ENCODE measurements at regions of chr16 and their contacts with region 1.

Region 1: GRCh38 chr16:2155091-2156021 is at the start of gene TRAF7:
- DNase-seq: peak; percentile 99
- H3K4me3 ChIP-seq: peak within 1 kb of the TSS; percentile 93 to 100 (median 98)
- H3K27ac ChIP-seq: peak within 1 kb of the TSS; percentile 83
- H3K4me1 ChIP-seq: peaks cover 0 to 52% (median 34%) of the 10 kb centered on the region in 4 experiments; a peak in 6 of 7 replicates
- H3K27me3 ChIP-seq: no peaks in the 10 kb centered on the region
- CTCF ChIP-seq: no peak; a peak in 1 of 4 replicates
- EP300 ChIP-seq: no peak
- POLR2A ChIP-seq: peak in 1 of 2 experiments; percentile 100; a peak in 2 of 3 replicates
- RAD21 ChIP-seq: no peak
- total RNA-seq, gene TRAF7: 148 and 155 TPM in 2 replicates

Region 2: GRCh38 chr16:1942810-1943726 is 212.3 kb before region 1 on chr16 and contains the start of gene MSRB1:
- CTCF ChIA-PET with region 1: no interaction called
- POLR2A ChIA-PET with region 1: no interaction called
- DNase-seq: peak; percentile 96 to 100
- H3K4me3 ChIP-seq: peak within 1 kb of the TSS; percentile 55 to 87 (median 66)
- H3K27ac ChIP-seq: no peak within 1 kb of the TSS
- H3K4me1 ChIP-seq: peaks cover 0 to 11% (median 6%) of the 10 kb centered on the region in 4 experiments; a peak in 5 of 7 replicates
- H3K27me3 ChIP-seq: peaks cover 0 to 2% (median 0%) of the 10 kb centered on the region in 4 experiments; a peak in 1 of 7 replicates
- CTCF ChIP-seq: no peak; a peak in 1 of 4 replicates
- EP300 ChIP-seq: no peak
- POLR2A ChIP-seq: peak in 1 of 2 experiments; percentile 80; a peak in 2 of 3 replicates
- RAD21 ChIP-seq: no peak
- total RNA-seq, gene MSRB1: 28.2 and 34.1 TPM in 2 replicates

Region 3: DNA sequence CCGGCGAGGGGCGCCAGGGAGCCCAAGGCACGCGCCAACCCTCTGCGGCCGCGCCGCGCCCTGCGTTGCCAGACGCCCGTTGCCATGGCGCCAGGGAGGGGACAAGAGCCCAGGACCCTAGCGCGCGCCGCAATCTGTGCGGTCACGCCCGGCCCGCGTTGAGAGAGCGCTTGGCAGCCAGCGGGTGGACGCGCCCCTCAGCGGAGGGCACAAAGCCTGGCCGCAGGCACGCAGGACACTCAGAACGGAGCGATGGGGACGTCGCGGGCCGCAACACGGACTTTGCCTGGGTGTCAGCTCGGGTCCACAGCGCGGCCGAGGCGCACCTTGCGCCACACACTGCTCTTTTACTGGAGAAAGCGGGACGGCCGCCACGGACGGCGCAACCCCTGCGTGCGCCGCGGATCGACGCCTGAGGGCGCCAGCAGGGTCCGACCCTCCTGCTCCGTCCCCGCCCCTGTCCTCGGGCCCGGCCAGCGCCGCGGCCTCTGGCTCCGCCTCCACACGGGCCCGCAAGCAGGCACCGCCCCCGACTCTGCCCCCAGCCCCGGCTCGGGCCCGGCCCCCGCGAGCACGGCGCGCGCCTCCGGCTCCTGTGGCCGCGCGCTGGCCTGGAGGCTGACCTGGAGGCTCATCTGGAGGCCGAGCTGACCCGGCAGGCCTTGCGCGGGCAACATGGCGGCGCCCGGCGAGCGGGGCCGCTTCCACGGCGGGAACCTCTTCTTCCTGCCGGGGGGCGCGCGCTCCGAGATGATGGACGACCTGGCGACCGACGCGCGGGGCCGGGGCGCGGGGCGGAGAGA is 171.6 kb before region 1 on chr16 and contains the start of gene GFER:
- CTCF ChIA-PET with region 1: interaction called, 3 read pairs
- POLR2A ChIA-PET with region 1: interaction called, 10 read pairs
- DNase-seq: peak; percentile 81 to 95
- H3K4me3 ChIP-seq: peak within 1 kb of the TSS; percentile 52 to 96 (median 73)
- H3K27ac ChIP-seq: peak within 1 kb of the TSS; percentile 43; the same call in 1 of the 2 replicates
- H3K4me1 ChIP-seq: peaks cover 3 to 41% (median 26%) of the 10 kb centered on the region in 4 experiments
- H3K27me3 ChIP-seq: peaks cover 8 to 45% (median 43%) of the 10 kb centered on the region in 4 experiments; a peak in 6 of 7 replicates
- CTCF ChIP-seq: peak in 2 of 3 experiments; percentile 58 to 60; a peak in 3 of 4 replicates
- EP300 ChIP-seq: 0 out of 3 replicates have a peak, but pooled peaks of 1 of the 2 experiments have one; percentile 48
- POLR2A ChIP-seq: peak in 1 of 2 experiments; percentile 93; a peak in 2 of 3 replicates
- RAD21 ChIP-seq: no peak; a peak in 1 of 4 replicates
- total RNA-seq, gene GFER: 37.9 and 45.4 TPM in 2 replicates

Region 4: GRCh38 chr16:2003827-2004641 is 151.3 kb before region 1 on chr16:
- CTCF ChIA-PET with region 1: interaction called, 17 read pairs
- POLR2A ChIA-PET with region 1: interaction called, 36 read pairs
- DNase-seq: peak; percentile 90 to 99
- H3K4me3 ChIP-seq: peak overlapping the region in 2 of 4 experiments; percentile 14 to 33; a peak in 3 of 8 replicates
- H3K27ac ChIP-seq: peak overlapping the region; percentile 53; the same call in 1 of the 2 replicates
- H3K4me1 ChIP-seq: peaks cover 0 to 33% (median 18%) of the 10 kb centered on the region in 4 experiments; a peak in 5 of 7 replicates
- H3K27me3 ChIP-seq: no peaks in the 10 kb centered on the region
- CTCF ChIP-seq: peak in 2 of 3 experiments; percentile 98 to 99; a peak in 3 of 4 replicates
- EP300 ChIP-seq: peak in 1 of 2 experiments; percentile 12; a peak in 1 of 3 replicates
- POLR2A ChIP-seq: no peak
- RAD21 ChIP-seq: peak; percentile 55 to 62

Region 5: GRCh38 chr16:2039274-2040031 is 115.9 kb before region 1 on chr16:
- CTCF ChIA-PET with region 1: no interaction called
- POLR2A ChIA-PET with region 1: interaction called, 14 read pairs
- DNase-seq: no peak
- H3K4me3 ChIP-seq: no peak overlapping the region
- H3K27ac ChIP-seq: no peak overlapping the region
- H3K4me1 ChIP-seq: peaks cover 0 to 4% (median 0%) of the 10 kb centered on the region in 4 experiments; a peak in 3 of 7 replicates
- H3K27me3 ChIP-seq: no peaks in the 10 kb centered on the region
- CTCF ChIP-seq: no peak
- EP300 ChIP-seq: no peak
- POLR2A ChIP-seq: no peak
- RAD21 ChIP-seq: no peak

Region 6: GRCh38 chr16:2090777-2091546 is 64.4 kb before region 1 on chr16:
- CTCF ChIA-PET with region 1: interaction called, 4 read pairs
- POLR2A ChIA-PET with region 1: interaction called, 54 read pairs
- DNase-seq: peak; percentile 59 to 97
- H3K4me3 ChIP-seq: peak overlapping the region; percentile 38 to 72 (median 45)
- H3K27ac ChIP-seq: no peak overlapping the region
- H3K4me1 ChIP-seq: peaks cover 0 to 12% (median 9%) of the 10 kb centered on the region in 4 experiments; a peak in 5 of 7 replicates
- H3K27me3 ChIP-seq: no peaks in the 10 kb centered on the region
- CTCF ChIP-seq: peak in 2 of 3 experiments; percentile 68 to 69; a peak in 3 of 4 replicates
- EP300 ChIP-seq: no peak
- POLR2A ChIP-seq: no peak
- RAD21 ChIP-seq: peak; percentile 46 to 60

Region 7: GRCh38 chr16:2205104-2205966 is 50.0 kb after region 1 on chr16 and contains the start of gene MLST8:
- CTCF ChIA-PET with region 1: no interaction called
- POLR2A ChIA-PET with region 1: interaction called, 156 read pairs
- DNase-seq: peak in 1 of 2 experiments; percentile 91
- H3K4me3 ChIP-seq: peak within 1 kb of the TSS; percentile 78 to 97 (median 92)
- H3K27ac ChIP-seq: peak within 1 kb of the TSS; percentile 98
- H3K4me1 ChIP-seq: peaks cover 0 to 13% (median 8%) of the 10 kb centered on the region in 4 experiments; a peak in 6 of 7 replicates
- H3K27me3 ChIP-seq: no peaks in the 10 kb centered on the region; a peak in 3 of 7 replicates
- CTCF ChIP-seq: no peak
- EP300 ChIP-seq: peak in 1 of 2 experiments; percentile 97; a peak in 2 of 3 replicates
- POLR2A ChIP-seq: peak in 1 of 2 experiments; percentile 94; a peak in 2 of 3 replicates
- RAD21 ChIP-seq: no peak
- total RNA-seq, gene MLST8: 67.6 and 69.6 TPM in 2 replicates

Region 8: GRCh38 chr16:2251483-2252240 is 96.3 kb after region 1 on chr16 and contains the start of gene ECI1:
- CTCF ChIA-PET with region 1: no interaction called
- POLR2A ChIA-PET with region 1: interaction called, 11 read pairs
- DNase-seq: peak; percentile 84 to 96
- H3K4me3 ChIP-seq: peak within 1 kb of the TSS; percentile 76 to 95 (median 83)
- H3K27ac ChIP-seq: peak within 1 kb of the TSS; percentile 86
- H3K4me1 ChIP-seq: peaks cover 4 to 6% (median 5%) of the 10 kb centered on the region in 4 experiments; a peak in 6 of 7 replicates
- H3K27me3 ChIP-seq: no peaks in the 10 kb centered on the region
- CTCF ChIP-seq: peak; percentile 61 to 63 (median 63)
- EP300 ChIP-seq: peak in 1 of 2 experiments; percentile 77; a peak in 1 of 3 replicates
- POLR2A ChIP-seq: peak; percentile 89 to 90
- RAD21 ChIP-seq: peak; percentile 62 to 71; a peak in 3 of 4 replicates
- total RNA-seq, gene ECI1: 79.5 and 80.0 TPM in 2 replicates